Activated CD4-positive, alpha-beta memory T cell treated with anti-CD3 and anti-CD28 coated beads, Interleukin-2, amount 10 ng/mL, durations not matched to agents 7 days and 5 days (primary cell): ENCODE measurements at regions of chr2 and their contacts with region 1.

Region 1: DNA sequence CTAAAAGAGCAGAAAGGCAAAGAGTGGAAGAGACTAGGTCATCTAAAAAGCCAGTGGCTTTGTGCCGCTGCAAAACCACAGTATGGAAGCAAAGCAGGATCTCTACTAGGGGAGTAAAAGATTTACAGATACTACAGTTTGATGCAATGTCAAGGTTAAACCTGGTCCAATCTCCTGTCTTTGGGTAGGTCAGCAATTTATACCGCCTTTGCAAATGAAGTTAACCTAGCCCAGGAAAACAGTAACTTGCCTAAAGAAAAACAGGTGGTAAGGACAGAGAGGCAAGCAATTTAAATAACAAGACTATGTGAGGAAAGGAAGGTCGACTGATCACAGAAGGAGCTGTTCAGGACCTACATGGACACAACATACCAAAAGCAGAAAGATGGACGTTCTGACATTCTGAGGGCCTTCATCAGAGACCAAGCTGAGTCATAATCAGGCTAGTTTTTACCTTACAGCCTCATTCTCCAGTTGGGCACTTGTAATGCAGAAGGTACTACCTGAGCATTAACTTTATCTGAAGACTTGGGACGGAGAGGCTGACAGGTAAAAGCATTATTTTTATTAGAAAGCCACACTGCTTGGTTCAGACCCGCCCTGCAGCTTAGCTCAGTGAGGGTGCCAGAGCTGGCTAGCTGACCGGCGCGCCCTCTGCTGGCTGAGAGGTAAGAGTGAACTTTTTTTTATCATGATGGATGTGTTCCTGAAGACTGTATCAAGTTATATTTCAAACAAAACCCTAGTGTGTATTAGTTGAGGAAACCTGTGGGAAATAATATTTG is 15.9 kb downstream of the CDKL4 start:
- DNase-seq: peak; percentile 88
- H3K4me3 Mint-ChIP-seq: peak overlapping the region; percentile 64
- H3K27ac Mint-ChIP-seq: peak overlapping the region; percentile 90
- H3K4me1 Mint-ChIP-seq: peaks cover 53% of the 10 kb centered on the region
- H3K27me3 Mint-ChIP-seq: no peaks in the 10 kb centered on the region

Region 2: GRCh38 chr2:38947240-38948239 is 280.3 kb before region 1 on chr2:
- CTCF ChIA-PET with region 1: interaction called, 182 read pairs
- POLR2A ChIA-PET with region 1: interaction called, 23 read pairs
- DNase-seq: peak; percentile 78
- H3K4me3 Mint-ChIP-seq: no peak overlapping the region
- H3K27ac Mint-ChIP-seq: no peak overlapping the region
- H3K4me1 Mint-ChIP-seq: no peaks in the 10 kb centered on the region
- H3K27me3 Mint-ChIP-seq: peaks cover 3% of the 10 kb centered on the region

Region 3: DNA sequence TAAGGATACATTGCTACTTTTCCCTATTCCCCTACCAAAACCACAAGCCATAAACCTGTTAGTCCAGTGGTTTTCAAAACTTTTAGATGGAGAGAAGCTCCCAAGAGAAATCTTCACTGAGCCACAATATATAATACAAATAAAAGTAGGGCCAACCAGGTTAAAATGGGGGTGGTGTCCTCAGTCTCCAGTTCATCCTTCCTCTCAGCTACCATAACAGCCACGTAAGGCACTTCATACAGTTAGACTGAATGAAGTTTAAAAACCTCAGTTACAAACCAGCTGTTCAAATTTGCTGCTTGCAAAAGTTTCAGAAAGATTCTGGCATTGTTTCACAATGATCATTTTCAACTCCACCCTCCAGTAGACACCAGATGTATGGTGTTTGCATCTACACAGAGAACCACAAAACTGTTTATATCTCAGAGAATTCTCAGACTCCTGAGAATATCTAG is 132.9 kb before region 1 on chr2:
- CTCF ChIA-PET with region 1: interaction called, 37 read pairs
- POLR2A ChIA-PET with region 1: interaction called, 7 read pairs
- DNase-seq: no peak
- H3K4me3 Mint-ChIP-seq: no peak overlapping the region
- H3K27ac Mint-ChIP-seq: peak overlapping the region; percentile 65
- H3K4me1 Mint-ChIP-seq: peaks cover 69% of the 10 kb centered on the region
- H3K27me3 Mint-ChIP-seq: no peaks in the 10 kb centered on the region

Region 4: DNA sequence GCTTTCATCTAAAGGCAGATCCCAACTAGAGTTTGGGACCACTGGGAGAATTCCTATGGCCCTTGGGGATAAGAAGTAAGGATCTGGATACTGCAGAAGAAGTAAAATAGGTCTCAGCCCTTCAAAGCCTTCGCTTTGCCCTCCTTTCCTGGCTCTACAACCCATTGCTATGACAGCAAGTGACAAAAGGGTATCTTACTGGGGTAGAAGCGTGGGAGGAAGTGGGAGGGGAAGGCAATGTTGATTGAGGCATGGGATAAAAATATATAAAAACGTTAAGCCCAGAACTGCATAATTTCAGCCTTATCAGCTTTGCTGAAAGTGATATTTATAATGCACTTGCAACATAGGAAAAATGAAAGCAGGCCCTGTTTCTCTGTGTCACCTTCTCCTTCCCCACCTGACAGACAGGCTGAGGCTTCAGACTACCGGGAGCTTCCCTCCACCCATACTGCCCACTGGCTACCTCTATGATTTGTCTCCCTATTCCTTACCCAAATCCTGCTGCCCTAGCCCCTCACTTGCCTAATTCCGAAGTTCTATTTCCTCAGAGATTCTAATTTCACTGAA is 92.0 kb before region 1 on chr2:
- CTCF ChIA-PET with region 1: interaction called, 53 read pairs
- POLR2A ChIA-PET with region 1: interaction called, 543 read pairs
- DNase-seq: no peak
- H3K4me3 Mint-ChIP-seq: peak overlapping the region; percentile 38
- H3K27ac Mint-ChIP-seq: peak overlapping the region; percentile 89
- H3K4me1 Mint-ChIP-seq: peaks cover 76% of the 10 kb centered on the region
- H3K27me3 Mint-ChIP-seq: peaks cover 2% of the 10 kb centered on the region

Region 5: DNA sequence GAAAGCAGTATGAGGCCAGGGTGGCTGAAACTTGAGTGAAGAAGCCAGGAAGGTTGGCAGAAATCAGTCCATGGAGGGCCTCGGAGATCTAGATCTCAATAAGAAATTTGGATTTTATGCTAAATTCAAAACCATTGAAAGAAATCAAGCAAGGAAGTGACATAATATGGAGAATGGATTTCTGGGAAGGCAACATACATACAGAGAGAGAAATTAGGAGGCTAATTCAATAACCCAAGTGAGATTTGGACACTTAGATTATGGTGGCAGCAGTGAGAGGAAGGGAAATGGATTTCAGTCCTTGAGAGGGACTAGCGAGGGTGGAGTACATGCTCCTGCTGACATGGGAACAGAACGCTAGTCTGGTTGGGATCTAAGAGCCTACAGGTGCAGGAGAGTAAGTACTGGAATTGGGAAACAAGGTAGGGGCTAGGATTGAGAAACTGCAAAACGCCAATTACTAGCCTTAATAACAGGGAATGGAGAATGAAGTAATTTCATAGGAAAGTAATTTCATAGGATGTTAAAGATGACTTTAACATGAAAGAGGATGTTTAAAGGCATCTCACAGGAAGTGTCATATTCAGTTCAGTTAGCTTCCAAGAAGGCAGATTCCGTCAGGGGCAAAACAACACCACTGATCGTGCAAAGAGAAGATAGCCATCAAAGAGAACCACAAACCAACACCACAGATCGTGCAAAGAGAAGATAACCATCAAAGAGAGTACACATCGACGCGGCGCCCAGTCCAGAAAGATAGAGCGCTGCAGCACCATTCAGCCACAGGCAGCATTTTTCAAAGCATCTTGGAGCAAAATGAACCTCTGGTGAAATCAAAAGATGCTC is 11.3 kb before region 1 on chr2:
- CTCF ChIA-PET with region 1: interaction called, 54 read pairs
- POLR2A ChIA-PET with region 1: interaction called, 55 read pairs
- DNase-seq: peak; percentile 89
- H3K4me3 Mint-ChIP-seq: peak overlapping the region; percentile 45
- H3K27ac Mint-ChIP-seq: peak overlapping the region; percentile 95
- H3K4me1 Mint-ChIP-seq: peaks cover 74% of the 10 kb centered on the region
- H3K27me3 Mint-ChIP-seq: no peaks in the 10 kb centered on the region

Region 6: GRCh38 chr2:39266139-39266805 is 38.5 kb after region 1 on chr2:
- CTCF ChIA-PET with region 1: no interaction called
- POLR2A ChIA-PET with region 1: no interaction called
- DNase-seq: peak; percentile 33
- H3K4me3 Mint-ChIP-seq: no peak overlapping the region
- H3K27ac Mint-ChIP-seq: peak overlapping the region; percentile 58
- H3K4me1 Mint-ChIP-seq: peaks cover 23% of the 10 kb centered on the region
- H3K27me3 Mint-ChIP-seq: no peaks in the 10 kb centered on the region